GM12878 (cell line): ENCODE measurements at regions of chr10 and their contacts with region 1.

Region 1: GRCh38 chr10:43461950-43462349 is 25.0 kb downstream of the ZNF487 start:
- DNase-seq: no peak
- ATAC-seq: peak; percentile 95
- H3K4me3 ChIP-seq: no peak overlapping the region
- H3K27ac ChIP-seq: no peak overlapping the region
- H3K4me1 ChIP-seq: no peaks in the 10 kb centered on the region
- H3K27me3 ChIP-seq: no peaks in the 10 kb centered on the region
- CTCF ChIP-seq: peak; percentile 52 to 68 (median 56); a peak in 5 of 6 replicates
- EP300 ChIP-seq: no peak
- POLR2A ChIP-seq: no peak
- RAD21 ChIP-seq: peak; percentile 84

Region 2: DNA sequence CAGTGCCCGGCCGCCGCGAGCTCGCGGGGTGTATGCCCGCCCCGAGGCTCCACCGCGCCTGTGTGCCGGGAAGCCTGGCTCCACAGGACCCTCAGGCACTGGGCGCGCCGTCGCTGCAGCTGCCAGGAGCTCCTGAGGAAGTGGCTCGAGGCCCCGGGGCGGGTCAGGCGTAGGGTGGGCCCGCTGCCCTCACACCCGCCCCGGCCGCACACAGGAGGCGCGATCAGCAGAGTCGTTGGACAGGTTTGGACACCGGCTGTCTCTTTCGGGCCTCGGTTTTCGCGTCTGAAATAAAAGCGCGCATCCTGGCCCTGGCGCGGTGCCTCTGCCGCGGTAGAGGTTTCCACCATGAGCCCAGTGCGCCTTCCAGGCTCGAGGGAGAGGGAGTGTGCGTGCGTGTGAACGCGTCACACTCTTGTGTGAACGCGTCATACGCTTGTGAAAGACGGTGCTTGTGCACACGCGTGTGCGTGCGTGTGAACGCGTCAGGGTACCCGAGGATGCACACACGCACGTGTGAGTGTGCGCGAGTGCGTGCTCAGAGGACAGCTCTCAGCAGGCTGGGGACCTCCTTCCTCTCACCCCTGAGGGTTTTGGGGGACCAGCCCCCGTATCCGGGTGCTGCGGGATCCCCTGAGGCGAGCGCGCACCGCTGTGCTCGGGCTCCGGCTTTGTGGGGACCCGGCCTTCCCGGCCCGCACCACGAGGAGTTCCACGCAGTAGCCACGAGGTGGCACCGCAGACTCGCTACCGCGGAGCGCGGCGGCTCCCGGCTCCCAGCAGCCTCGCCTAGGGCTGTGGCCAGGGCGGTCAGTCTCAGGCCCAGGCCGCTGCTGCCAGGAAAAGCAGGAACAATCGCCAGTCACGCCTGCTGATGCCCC is 595.6 kb before region 1 on chr10:
- CTCF ChIA-PET with region 1: no interaction called
- POLR2A ChIA-PET with region 1: no interaction called
- RAD21 ChIA-PET with region 1: no interaction called
- SMC1A ChIA-PET with region 1: no interaction called
- in situ Hi-C with region 1: loop called (anchors 10 kb)
- intact Hi-C with region 1: no loop called
- DNase-seq: no peak
- ATAC-seq: peak; percentile 80
- H3K4me3 ChIP-seq: no peak overlapping the region
- H3K27ac ChIP-seq: no peak overlapping the region
- H3K4me1 ChIP-seq: no peaks in the 10 kb centered on the region
- H3K27me3 ChIP-seq: no peaks in the 10 kb centered on the region; a peak in 1 of 4 replicates
- CTCF ChIP-seq: peak; percentile 20 to 45 (median 42); a peak in 4 of 6 replicates
- EP300 ChIP-seq: no peak
- POLR2A ChIP-seq: no peak
- RAD21 ChIP-seq: peak; percentile 54

Region 3: GRCh38 chr10:43348511-43349312 is 113.2 kb before region 1 on chr10:
- CTCF ChIA-PET with region 1: interaction called, 5 read pairs
- POLR2A ChIA-PET with region 1: no interaction called
- RAD21 ChIA-PET with region 1: no interaction called
- SMC1A ChIA-PET with region 1: no interaction called
- in situ Hi-C with region 1: no loop called
- intact Hi-C with region 1: loop called (anchors 1 kb)
- DNase-seq: peak; percentile 36
- ATAC-seq: peak; percentile 100
- H3K4me3 ChIP-seq: no peak overlapping the region
- H3K27ac ChIP-seq: no peak overlapping the region
- H3K4me1 ChIP-seq: no peaks in the 10 kb centered on the region
- H3K27me3 ChIP-seq: peaks cover 0 to 2% of the 10 kb centered on the region in 2 experiments; a peak in 1 of 4 replicates
- CTCF ChIP-seq: peak; percentile 94 to 97 (median 95)
- EP300 ChIP-seq: no peak
- POLR2A ChIP-seq: no peak
- RAD21 ChIP-seq: peak; percentile 86